Activated CD8-positive, alpha-beta T cell treated with anti-CD3 and anti-CD28 coated beads, Interleukin-2, amount 10 ng/mL, durations not matched to agents 7 days and 5 days (primary cell): ENCODE measurements at regions of chr13 and their contacts with region 1.

Region 1: GRCh38 chr13:40600149-40600751 is 66.2 kb downstream of the FOXO1 start:
- DNase-seq: no peak
- ATAC-seq: no peak
- H3K4me3 Mint-ChIP-seq: peak overlapping the region; percentile 43
- H3K27ac Mint-ChIP-seq: peak overlapping the region; percentile 75
- H3K4me1 Mint-ChIP-seq: peaks cover 76% of the 10 kb centered on the region
- H3K27me3 Mint-ChIP-seq: no peaks in the 10 kb centered on the region

Region 2: GRCh38 chr13:40613192-40613818 is 13.1 kb after region 1 on chr13:
- CTCF ChIA-PET with region 1: interaction called, 6 read pairs
- POLR2A ChIA-PET with region 1: interaction called, 11 read pairs
- DNase-seq: peak; percentile 76
- ATAC-seq: peak; percentile 85
- H3K4me3 Mint-ChIP-seq: peak overlapping the region; percentile 82
- H3K27ac Mint-ChIP-seq: peak overlapping the region; percentile 97
- H3K4me1 Mint-ChIP-seq: peaks cover 78% of the 10 kb centered on the region
- H3K27me3 Mint-ChIP-seq: no peaks in the 10 kb centered on the region